Common myeloid progenitor, CD34-positive (primary cell): ENCODE measurements at regions of chr3 and their contacts with region 1.

Region 1: GRCh38 chr3:24137958-24138875 is 193.1 kb downstream of the NR1D2 start:
- DNase-seq: no peak
- H3K4me3 ChIP-seq: no peak overlapping the region
- H3K27ac ChIP-seq: no peak overlapping the region
- H3K4me1 ChIP-seq: no peaks in the 10 kb centered on the region
- H3K27me3 ChIP-seq: peaks cover 0 to 2% (median 0%) of the 10 kb centered on the region in 5 experiments

Region 2: GRCh38 chr3:24149032-24149431 is 10.8 kb after region 1 on chr3:
- CTCF ChIA-PET with region 1: interaction called, 13 read pairs
- POLR2A ChIA-PET with region 1: no interaction called
- DNase-seq: no peak
- H3K4me3 ChIP-seq: no peak overlapping the region
- H3K27ac ChIP-seq: no peak overlapping the region
- H3K4me1 ChIP-seq: peaks cover 0 to 10% (median 2%) of the 10 kb centered on the region in 4 experiments
- H3K27me3 ChIP-seq: peaks cover 0 to 1% (median 0%) of the 10 kb centered on the region in 5 experiments